Aorta (tissue), 5 donors: ENCODE measurements at regions of chr15 and their contacts with region 1.

Region 1: DNA sequence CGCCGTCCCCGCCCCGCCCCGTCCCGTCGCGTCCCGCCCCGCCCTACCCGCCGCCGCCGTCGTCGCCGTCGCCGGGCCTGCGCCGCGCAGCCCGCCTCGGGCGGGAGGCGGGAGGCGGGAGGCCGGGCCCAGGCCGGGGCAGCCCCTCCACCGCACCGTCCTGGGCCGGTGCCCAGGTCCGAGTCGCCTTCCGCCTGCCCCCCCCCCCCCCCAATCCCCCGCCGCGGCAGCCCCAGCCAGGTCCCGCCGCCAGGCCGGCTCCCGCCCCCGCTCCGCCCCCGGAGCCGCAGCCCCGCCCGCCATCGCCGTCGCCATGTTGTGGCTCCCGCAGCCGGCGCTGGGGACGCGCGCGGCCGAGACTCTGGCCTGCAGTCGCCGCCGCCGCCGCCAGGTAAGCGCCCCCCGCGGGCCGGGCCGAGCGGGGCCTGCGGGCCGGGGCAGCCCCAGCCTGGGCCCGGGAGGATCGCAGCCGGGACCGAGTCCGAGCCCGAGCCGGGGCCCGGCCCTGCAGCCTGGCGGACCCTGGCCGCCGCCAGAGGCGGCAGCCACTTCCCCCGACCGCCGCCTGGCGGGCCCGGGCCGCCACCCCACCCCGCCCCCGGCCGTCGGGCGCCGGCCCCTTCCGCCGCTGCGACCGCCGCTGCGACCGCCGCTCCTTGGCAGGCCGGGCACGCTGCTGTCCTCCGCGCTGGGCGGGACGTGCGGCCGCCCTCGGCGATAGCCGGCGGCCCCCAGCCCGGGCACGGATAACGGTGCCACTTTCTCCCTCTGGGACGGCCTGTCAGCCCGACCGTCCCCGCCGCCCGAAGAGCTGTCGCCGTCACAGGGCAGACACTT is at the start of gene ZNF592:
- DNase-seq: peak; percentile 91 to 95
- ATAC-seq: peak; percentile 85
- H3K4me3 ChIP-seq: peak within 1 kb of the TSS; percentile 86 to 87
- H3K27ac ChIP-seq: peak within 1 kb of the TSS; percentile 85 to 96
- H3K4me1 ChIP-seq: no peaks in the 10 kb centered on the region
- H3K27me3 ChIP-seq: no peaks in the 10 kb centered on the region
- total RNA-seq, gene ZNF592: 27.8 to 35.8 TPM

Region 2: DNA sequence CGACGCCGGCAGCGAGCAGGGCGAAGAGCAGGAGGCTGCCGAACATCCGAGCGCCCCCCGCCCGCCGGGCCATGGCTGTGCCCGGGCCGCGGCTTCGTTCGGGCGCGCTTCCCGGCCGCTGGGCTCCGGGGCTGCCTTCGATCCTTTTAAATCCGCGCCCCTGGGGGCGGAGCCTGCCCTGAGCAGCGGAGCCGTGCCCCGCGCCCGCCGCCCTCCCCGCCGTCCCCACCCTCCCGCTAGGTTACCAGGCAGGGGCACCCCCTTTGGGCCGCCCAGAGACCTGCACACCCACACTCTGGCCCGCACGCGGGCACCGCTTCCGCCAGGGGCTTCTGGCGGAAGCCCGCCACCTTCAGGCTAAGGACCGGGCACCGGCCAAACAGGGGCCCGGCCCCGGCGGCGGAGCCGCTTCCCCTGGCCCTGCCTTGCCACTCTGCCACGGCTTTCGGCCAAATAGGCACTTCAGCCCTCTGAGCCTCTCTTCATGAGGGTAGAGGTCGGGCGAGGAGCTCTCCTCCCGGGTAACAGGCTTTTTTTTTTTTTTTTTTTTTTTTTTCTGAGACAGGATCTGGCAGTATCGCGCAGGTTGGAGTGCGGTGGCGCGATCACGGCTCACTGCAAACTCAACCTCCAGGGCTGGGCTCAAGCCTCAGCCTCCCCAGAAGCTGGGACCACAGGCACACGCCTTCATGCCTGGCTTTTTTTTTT is 90.3 kb before region 1 on chr15 and contains the start of gene NMB:
- intact Hi-C with region 1: loop called in 1 of 2 experiments (anchors 5 kb)
- DNase-seq: peak; percentile 84 to 93
- ATAC-seq: peak; percentile 84
- H3K4me3 ChIP-seq: peak within 1 kb of the TSS; percentile 58 to 63
- H3K27ac ChIP-seq: peak within 1 kb of the TSS in 1 of 2 donors; percentile 84
- H3K4me1 ChIP-seq: no peaks in the 10 kb centered on the region
- H3K27me3 ChIP-seq: no peaks in the 10 kb centered on the region
- total RNA-seq, gene NMB: 5.2 to 12.5 TPM

Region 3: DNA sequence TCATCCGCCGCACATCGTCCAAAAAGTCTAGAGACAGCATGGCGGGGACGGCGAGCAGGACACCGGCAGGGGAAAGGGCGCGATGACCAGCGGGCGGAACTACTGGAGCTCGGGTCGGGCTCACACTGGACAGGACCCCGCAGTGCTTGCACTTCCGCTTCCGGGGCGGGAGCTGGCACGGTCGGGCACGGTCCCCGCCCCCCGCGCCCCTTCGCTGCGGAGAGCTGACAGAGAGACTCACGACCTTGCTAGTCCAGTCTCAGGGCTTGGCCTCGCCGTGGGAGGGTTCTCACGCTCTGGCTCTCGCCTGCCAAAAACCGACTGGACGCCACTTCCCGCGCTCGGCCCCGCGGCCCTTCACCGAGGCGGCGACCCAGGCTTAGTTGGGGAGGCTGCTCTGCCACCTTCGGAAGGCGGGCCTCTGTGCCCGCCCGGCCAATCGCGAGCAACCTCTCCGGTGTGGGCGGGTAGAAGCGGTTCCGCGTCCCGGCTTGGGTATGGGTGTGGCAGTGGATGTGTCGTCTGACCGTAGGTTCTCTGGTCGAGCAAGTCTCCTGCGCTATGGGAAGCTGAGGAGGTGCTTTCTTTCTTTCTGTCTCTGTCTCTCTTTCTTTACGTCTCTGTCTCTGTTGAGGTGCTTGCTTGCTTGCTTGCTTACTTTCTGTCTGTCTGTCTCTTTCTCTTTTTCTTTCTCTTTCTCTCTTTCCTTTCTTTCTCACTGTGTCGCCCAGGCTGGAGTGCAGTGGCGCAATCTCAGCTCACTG is 32.3 kb before region 1 on chr15 and contains the start of gene SEC11A:
- intact Hi-C with region 1: loop called in 1 of 2 experiments (anchors 2 kb)
- DNase-seq: peak; percentile 97 to 98
- ATAC-seq: peak; percentile 99
- H3K4me3 ChIP-seq: peak within 1 kb of the TSS; percentile 62 to 71
- H3K27ac ChIP-seq: peak within 1 kb of the TSS; percentile 78 to 79
- H3K4me1 ChIP-seq: no peaks in the 10 kb centered on the region
- H3K27me3 ChIP-seq: no peaks in the 10 kb centered on the region
- total RNA-seq, gene SEC11A: 99.3 to 115 TPM

Region 4: GRCh38 chr15:84785053-84785452 is 36.6 kb after region 1 on chr15:
- intact Hi-C with region 1: loop called in 1 of 2 experiments (anchors 5 kb)
- DNase-seq: no peak
- ATAC-seq: no peak
- H3K4me3 ChIP-seq: no peak overlapping the region
- H3K27ac ChIP-seq: no peak overlapping the region
- H3K4me1 ChIP-seq: peaks cover 3 to 4% of the 10 kb centered on the region in 2 donors
- H3K27me3 ChIP-seq: no peaks in the 10 kb centered on the region

Region 5: DNA sequence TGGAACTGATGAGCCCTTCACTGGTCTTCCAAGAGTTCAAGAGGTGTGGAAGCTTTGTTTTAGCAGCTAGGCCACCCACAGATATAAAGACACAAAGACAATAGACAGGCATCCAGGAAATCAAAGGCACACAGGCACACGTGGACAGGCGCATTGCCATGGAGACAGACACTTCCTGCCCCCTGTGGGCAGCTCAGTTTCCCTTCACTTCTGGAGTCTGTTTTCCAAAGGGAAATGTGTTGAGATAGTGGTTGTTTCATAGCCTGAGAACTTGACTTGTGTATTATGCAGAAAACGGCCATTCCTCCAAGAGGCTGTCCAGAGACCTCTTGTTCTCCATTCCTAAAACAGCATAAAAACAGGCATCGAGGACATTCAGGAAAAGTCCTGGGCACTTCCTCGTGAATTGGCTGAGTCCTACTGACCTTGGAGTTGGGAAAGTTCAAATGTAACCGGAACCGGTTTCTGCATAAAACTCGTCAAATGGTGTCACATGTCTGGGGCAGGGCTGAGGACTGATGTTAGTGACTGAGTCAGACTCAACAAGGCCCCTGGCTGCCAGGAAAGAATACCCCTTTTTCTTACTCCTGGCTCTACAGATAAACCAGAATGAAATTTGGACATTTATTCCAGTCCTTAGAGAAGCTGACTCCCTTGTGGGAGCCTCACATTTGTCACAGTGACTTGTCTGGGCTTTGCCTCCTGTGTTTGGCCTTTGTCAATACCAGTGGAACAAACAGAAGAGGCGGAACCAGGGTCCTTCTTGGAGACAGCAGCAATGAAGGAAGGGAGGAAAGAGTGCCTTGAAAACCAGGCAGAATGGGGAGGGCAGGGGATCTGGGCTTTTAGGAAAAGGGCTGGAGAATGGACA is 70.0 kb after region 1 on chr15:
- intact Hi-C with region 1: loop called (anchors 2 to 5 kb)
- DNase-seq: no peak
- ATAC-seq: peak; percentile 43
- H3K4me3 ChIP-seq: peak overlapping the region; percentile 24 to 57
- H3K27ac ChIP-seq: peak overlapping the region; percentile 96 to 98
- H3K4me1 ChIP-seq: peaks cover 2% of the 10 kb centered on the region in 2 donors
- H3K27me3 ChIP-seq: no peaks in the 10 kb centered on the region

Region 6: DNA sequence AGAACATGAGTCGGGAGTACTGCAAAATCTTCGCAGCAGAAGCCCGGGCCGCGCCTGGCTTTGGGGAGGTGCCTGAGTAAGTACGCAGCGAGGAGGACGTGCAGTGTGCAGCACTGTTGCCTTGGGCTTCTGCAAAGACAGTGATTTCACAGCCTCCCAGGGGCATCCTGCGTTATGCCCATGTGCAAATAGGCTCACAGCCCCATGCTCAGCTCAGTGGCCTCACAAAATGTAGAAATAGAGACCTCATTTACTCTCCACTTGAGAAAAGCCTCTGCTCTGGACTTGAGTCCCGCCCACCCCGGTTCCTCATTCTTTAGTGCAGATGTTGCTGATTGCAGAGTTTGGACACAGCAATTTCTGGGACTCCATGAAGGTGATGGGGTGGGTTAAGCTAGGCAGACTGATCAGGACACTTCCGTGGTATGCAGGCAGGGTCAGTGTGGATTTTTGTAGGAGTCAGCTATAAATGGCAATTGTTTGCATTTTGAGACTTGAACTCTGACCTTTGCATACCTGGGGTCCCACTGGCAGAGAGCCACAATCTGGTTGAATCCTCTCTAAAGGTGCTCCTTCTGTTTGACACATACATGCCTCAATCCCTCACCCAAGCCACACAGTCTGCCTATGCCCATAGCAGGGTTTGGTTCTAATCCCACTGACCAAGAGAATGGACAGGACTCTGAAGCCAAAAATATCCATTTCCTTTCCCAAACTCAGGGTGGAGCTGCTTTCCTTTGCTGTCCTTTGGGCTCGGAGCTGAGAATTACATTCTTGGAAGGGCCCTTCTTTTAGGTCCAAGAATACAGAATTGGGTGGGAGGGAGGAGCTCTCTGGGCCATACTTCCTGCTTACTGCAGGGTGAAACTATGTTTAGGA is 115.3 kb after region 1 on chr15:
- intact Hi-C with region 1: loop called in 1 of 2 experiments (anchors 10 kb)
- DNase-seq: no peak
- ATAC-seq: peak; percentile 68
- H3K4me3 ChIP-seq: no peak overlapping the region
- H3K27ac ChIP-seq: peak overlapping the region in 1 of 2 donors; percentile 61
- H3K4me1 ChIP-seq: peaks cover 1 to 2% of the 10 kb centered on the region in 2 donors
- H3K27me3 ChIP-seq: no peaks in the 10 kb centered on the region

Region 7: GRCh38 chr15:86106306-86106705 is 1357.8 kb after region 1 on chr15:
- intact Hi-C with region 1: no loop called
- DNase-seq: no peak
- ATAC-seq: no peak
- H3K4me3 ChIP-seq: no peak overlapping the region
- H3K27ac ChIP-seq: no peak overlapping the region
- H3K4me1 ChIP-seq: no peaks in the 10 kb centered on the region
- H3K27me3 ChIP-seq: peaks cover 0 to 1% of the 10 kb centered on the region in 2 donors